BJ (cell line): ENCODE measurements at regions of chr11 and their contacts with region 1.

Region 1: DNA sequence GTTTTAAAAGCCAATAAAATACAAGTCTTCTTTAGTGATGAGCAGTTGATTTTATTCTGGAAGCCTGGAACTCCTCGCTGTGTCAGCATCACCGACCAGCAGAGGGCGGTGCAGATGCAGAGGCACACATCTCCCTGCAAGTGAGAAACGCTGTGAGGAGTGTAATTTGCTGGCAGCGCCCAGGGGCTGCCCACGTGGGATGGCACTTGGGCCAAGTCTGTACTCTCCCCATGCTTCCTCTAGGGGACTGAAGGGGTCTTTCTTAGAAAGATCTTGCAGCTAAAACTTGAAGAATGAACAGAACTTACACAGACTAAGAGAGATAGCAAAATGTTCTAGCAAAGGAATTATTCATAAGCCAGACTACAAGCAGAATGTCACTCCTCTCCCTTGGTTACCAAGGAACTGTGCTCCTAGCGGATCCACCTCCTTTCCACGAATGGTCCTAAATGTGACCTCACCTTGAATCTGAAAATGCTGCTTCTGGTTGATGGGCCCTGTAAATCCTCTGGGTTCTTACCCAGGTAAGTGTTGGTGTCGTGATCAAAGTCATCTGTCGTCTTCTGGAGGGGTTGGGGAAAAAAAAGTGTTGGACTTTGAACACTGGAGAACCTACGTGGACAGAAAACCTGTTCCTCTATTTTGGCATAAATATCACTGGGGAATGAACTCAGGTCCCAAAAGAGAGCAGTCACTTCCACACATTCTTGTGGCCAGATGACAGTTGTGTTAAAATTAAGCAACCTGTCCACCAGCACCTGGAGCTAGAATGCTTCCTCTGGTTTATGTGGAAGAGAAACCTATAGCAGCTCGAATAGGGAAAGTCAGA is 31.8 kb downstream of the CNTF start:
- DNase-seq: peak; percentile 5
- H3K4me3 ChIP-seq: no peak overlapping the region
- H3K27me3 ChIP-seq: no peaks in the 10 kb centered on the region
- CTCF ChIP-seq: peak; percentile 96

Region 2: GRCh38 chr11:58788355-58789023 is 134.2 kb after region 1 on chr11:
- CTCF ChIA-PET with region 1: interaction called, 30 read pairs
- POLR2A ChIA-PET with region 1: no interaction called
- DNase-seq: no peak
- H3K4me3 ChIP-seq: no peak overlapping the region
- H3K27me3 ChIP-seq: no peaks in the 10 kb centered on the region
- CTCF ChIP-seq: peak; percentile 84

Region 3: DNA sequence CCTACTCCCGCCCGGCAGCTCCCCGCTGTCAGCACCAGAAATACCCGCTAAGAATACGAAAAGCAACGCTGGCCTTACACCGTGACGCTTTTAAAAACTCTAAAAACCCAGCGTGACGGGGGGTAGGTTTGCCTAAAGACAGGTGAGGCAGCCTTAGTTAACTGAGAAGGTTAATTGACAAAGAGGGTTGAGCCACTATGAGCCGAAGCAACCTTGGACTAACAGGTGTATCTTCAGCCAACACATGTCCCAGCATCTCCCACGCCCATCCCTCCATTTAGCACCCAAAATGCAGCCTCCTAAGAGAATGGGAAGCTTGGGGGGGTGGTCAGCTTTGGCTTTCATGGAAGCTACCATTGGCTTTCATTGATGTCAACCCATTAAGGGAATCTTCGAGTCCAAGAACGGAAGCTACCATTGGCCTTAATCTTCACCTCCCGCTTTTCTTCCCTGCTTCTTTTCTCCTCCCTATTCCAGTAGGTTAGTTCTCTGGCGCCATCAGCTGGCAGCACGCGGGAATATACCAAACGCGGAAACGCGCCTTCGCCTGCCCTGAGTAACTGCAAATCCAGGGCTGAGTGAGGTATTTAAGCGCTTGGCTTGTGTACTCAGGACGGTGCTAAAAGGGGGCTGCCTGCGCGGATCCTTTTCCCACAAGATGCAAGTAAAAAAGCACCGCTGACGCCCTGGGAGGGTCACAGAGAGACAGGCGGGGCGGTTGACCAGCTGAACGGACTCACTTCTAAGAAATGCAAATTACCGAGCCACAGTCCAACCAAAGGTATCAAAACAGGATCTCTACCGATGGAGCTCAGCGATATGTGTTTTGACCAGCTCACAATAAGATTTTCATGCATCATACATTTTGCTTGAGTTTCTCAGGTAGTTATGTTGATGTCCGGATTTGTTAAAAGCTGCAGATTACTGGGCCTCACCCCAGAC is 246.5 kb after region 1 on chr11:
- CTCF ChIA-PET with region 1: interaction called, 12 read pairs
- POLR2A ChIA-PET with region 1: no interaction called
- DNase-seq: no peak
- H3K4me3 ChIP-seq: no peak overlapping the region
- H3K27me3 ChIP-seq: no peaks in the 10 kb centered on the region
- CTCF ChIP-seq: peak; percentile 65